ENCODE measurements at regions of chr10 and their contacts with region 1.

Region 1: GRCh38 chr10:78657163-78657861 is 411.5 kb upstream of the ZMIZ1 start:
- DNase-seq: peak; percentile 40 to 77
- H3K4me3 ChIP-seq: no peak overlapping the region
- H3K27ac ChIP-seq: no peak overlapping the region
- H3K4me1 ChIP-seq: peaks cover 13% of the 10 kb centered on the region
- H3K27me3 ChIP-seq: peaks cover 6% of the 10 kb centered on the region; the same call in 1 of the 2 replicates
- CTCF ChIP-seq: peak; percentile 83

Region 2: GRCh38 chr10:78211561-78212051 is 445.7 kb before region 1 on chr10:
- CTCF ChIA-PET with region 1: interaction called, 3 read pairs
- POLR2A ChIA-PET with region 1: no interaction called
- intact Hi-C with region 1: loop called (anchors 2 kb)
- DNase-seq: peak in 1 of 2 experiments; percentile 41
- H3K4me3 ChIP-seq: no peak overlapping the region
- H3K27ac ChIP-seq: no peak overlapping the region
- H3K4me1 ChIP-seq: no peaks in the 10 kb centered on the region
- H3K27me3 ChIP-seq: peaks cover 32% of the 10 kb centered on the region
- CTCF ChIP-seq: peak; percentile 84

Region 3: DNA sequence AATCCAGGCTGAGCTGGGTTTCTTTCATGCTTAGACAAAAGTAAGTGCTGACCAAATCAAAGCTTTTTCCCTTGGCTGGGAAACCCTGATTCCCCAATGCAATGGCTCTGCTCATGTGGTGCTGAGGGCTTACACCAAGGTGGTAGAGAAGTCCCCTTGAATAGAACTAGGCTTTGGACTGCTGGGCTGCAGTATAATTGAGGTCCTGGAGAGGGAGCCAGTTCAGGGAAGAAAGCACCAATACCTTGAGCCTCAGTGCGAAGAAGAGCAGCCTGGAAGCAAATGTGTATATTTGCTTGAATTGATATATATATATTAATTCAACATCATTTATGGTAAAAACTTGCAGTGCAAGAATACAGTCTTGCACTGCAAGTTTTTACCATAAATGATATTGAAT is 232.6 kb before region 1 on chr10:
- CTCF ChIA-PET with region 1: no interaction called
- POLR2A ChIA-PET with region 1: no interaction called
- intact Hi-C with region 1: no loop called
- DNase-seq: no peak
- H3K4me3 ChIP-seq: no peak overlapping the region
- H3K27ac ChIP-seq: no peak overlapping the region
- H3K4me1 ChIP-seq: no peaks in the 10 kb centered on the region
- H3K27me3 ChIP-seq: no peaks in the 10 kb centered on the region
- CTCF ChIP-seq: peak; percentile 59

Region 4: GRCh38 chr10:78437998-78438906 is 219.1 kb before region 1 on chr10:
- CTCF ChIA-PET with region 1: no interaction called
- POLR2A ChIA-PET with region 1: no interaction called
- intact Hi-C with region 1: loop called (anchors 10 kb)
- DNase-seq: no peak
- H3K4me3 ChIP-seq: no peak overlapping the region
- H3K27ac ChIP-seq: no peak overlapping the region
- H3K4me1 ChIP-seq: no peaks in the 10 kb centered on the region
- H3K27me3 ChIP-seq: peaks cover 7% of the 10 kb centered on the region; the same call in 1 of the 2 replicates
- CTCF ChIP-seq: peak; percentile 33; the same call in 1 of the 2 replicates

Region 5: GRCh38 chr10:78599081-78599853 is 58.0 kb before region 1 on chr10:
- CTCF ChIA-PET with region 1: no interaction called
- POLR2A ChIA-PET with region 1: no interaction called
- intact Hi-C with region 1: loop called (anchors 2 kb)
- DNase-seq: no peak
- H3K4me3 ChIP-seq: no peak overlapping the region
- H3K27ac ChIP-seq: no peak overlapping the region
- H3K4me1 ChIP-seq: no peaks in the 10 kb centered on the region
- H3K27me3 ChIP-seq: no peaks in the 10 kb centered on the region; the same call in 1 of the 2 replicates
- CTCF ChIP-seq: peak; percentile 34; the same call in 1 of the 2 replicates

Region 6: DNA sequence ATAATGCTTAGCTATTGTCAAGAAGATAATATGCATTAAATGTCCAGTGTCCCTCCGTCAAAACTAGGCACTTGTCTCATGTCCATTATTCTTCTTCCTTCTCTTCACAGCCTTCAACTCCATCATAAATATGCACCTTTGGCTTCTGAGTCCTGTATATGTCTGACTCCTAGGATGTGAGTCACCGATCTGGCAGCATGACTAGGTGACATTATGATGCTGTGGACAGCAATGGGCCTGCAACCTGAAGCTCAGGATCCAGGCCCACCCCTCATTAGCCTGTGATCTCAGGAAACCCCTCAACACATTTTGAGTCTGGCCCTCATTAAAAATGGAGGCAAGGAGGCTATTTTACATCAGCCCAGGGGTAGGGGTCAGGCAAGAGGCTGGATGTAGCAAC is 48.9 kb after region 1 on chr10:
- CTCF ChIA-PET with region 1: interaction called, 11 read pairs
- POLR2A ChIA-PET with region 1: no interaction called
- intact Hi-C with region 1: no loop called
- DNase-seq: peak in 1 of 2 experiments; percentile 51
- H3K4me3 ChIP-seq: no peak overlapping the region
- H3K27ac ChIP-seq: no peak overlapping the region
- H3K4me1 ChIP-seq: peaks cover 7% of the 10 kb centered on the region; the same call in 1 of the 2 replicates
- H3K27me3 ChIP-seq: no peaks in the 10 kb centered on the region
- CTCF ChIP-seq: no peak